PC-9 (cell line): ENCODE measurements at regions of chr6 and their contacts with region 1.

Region 1: DNA sequence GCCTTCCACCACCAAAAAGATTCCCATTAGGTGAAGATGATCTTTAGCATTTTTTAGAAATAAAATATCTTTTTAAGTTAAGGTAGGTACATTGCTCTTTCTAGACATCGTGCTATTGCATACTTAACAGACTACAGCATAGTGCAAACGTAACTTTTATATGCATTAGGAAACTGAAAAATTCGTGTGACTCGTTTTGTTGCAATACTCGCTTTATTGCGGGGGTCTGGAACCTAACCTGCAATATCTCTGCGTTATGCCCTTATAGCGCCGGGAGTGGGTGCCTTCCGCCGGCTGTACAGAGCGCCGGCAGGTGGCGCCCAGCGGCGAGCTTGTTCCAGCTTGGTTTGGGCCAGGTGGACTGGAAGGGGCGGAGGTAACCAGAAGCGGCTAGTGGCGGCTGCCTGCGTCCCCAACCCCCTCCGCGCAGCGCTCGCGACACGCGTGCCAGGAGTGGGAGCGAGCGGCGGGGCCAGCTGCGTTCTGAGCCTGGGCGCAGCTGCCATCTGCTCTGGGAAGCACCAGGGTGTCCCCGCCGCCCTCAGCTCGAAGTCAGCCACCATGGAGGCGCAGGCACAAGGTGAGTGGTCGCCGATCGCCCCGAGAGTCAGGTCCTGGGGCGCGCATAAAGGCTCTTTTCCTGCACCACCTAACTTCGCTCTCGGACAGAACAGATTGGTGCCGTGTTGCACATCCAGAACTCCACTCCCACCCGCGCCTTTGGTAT is at the start of gene TPD52L1:
- DNase-seq: peak; percentile 75 to 84
- H3K4me3 ChIP-seq: peak within 1 kb of the TSS; percentile 74
- H3K27ac ChIP-seq: peak within 1 kb of the TSS; percentile 63
- H3K4me1 ChIP-seq: peaks cover 44% of the 10 kb centered on the region
- H3K27me3 ChIP-seq: no peaks in the 10 kb centered on the region
- CTCF ChIP-seq: peak; percentile 97
- total RNA-seq, gene TPD52L1: 184 and 203 TPM in 2 replicates

Region 2: GRCh38 chr6:124870611-124871459 is 282.7 kb before region 1 on chr6:
- CTCF ChIA-PET with region 1: no interaction called
- POLR2A ChIA-PET with region 1: interaction called, 6 read pairs
- intact Hi-C with region 1: loop called (anchors 1 kb)
- DNase-seq: no peak
- H3K4me3 ChIP-seq: no peak overlapping the region
- H3K27ac ChIP-seq: no peak overlapping the region
- H3K4me1 ChIP-seq: no peaks in the 10 kb centered on the region
- H3K27me3 ChIP-seq: no peaks in the 10 kb centered on the region
- CTCF ChIP-seq: peak; percentile 92

Region 3: DNA sequence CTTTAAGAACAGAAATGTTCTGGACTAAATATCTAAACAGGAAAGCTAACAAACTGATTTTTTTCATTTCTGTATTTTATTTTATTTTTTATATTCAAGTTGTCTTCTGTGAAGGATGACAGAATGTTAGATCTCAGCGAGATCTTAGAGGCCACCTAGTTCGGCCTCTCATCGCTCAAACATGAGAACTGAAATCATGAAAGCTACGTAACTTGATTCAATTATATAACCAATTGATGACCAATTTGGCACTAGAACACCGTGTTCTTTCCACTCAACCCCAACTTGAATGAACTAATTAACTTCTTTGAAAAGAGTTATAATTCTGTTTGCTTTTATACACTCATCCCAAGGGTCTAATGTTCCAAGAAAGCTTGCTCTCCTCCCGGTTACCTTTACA is 215.9 kb before region 1 on chr6:
- CTCF ChIA-PET with region 1: no interaction called
- POLR2A ChIA-PET with region 1: no interaction called
- intact Hi-C with region 1: no loop called
- DNase-seq: no peak
- H3K4me3 ChIP-seq: no peak overlapping the region
- H3K27ac ChIP-seq: no peak overlapping the region
- H3K4me1 ChIP-seq: no peaks in the 10 kb centered on the region
- H3K27me3 ChIP-seq: no peaks in the 10 kb centered on the region
- CTCF ChIP-seq: no peak

Region 4: GRCh38 chr6:125123788-125124777 is 29.5 kb before region 1 on chr6:
- CTCF ChIA-PET with region 1: no interaction called
- POLR2A ChIA-PET with region 1: no interaction called
- intact Hi-C with region 1: loop called (anchors 1 kb)
- DNase-seq: peak; percentile 57 to 84
- H3K4me3 ChIP-seq: no peak overlapping the region
- H3K27ac ChIP-seq: peak overlapping the region; percentile 30; the same call in 1 of the 2 replicates
- H3K4me1 ChIP-seq: peaks cover 19% of the 10 kb centered on the region
- H3K27me3 ChIP-seq: no peaks in the 10 kb centered on the region
- CTCF ChIP-seq: no peak; the same call in 1 of the 2 replicates

Region 5: GRCh38 chr6:125197795-125198269 is 44.3 kb after region 1 on chr6:
- CTCF ChIA-PET with region 1: no interaction called
- POLR2A ChIA-PET with region 1: interaction called, 5 read pairs
- intact Hi-C with region 1: loop called (anchors 2 kb)
- DNase-seq: peak; percentile 63 to 68
- H3K4me3 ChIP-seq: no peak overlapping the region
- H3K27ac ChIP-seq: peak overlapping the region; percentile 55
- H3K4me1 ChIP-seq: peaks cover 87% of the 10 kb centered on the region
- H3K27me3 ChIP-seq: no peaks in the 10 kb centered on the region
- CTCF ChIP-seq: no peak

Region 6: DNA sequence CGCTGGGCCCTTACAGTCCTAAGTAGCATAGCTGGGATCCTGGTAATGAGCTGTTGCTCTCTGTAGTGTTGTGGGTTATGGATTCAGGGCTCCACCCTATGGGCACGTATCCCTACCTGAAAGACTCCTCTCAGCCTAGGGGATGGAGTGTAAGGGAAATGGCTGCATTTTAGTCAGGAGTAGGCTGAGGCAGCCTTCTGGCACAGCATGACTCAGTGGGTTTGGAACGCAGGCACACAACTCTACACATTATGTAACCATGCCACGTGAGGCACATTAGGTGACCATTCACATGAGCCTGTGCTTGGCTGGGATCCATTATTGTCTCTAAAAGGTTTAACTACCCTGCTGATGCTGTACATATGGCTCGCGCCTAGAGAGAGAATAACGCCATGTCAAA is 120.4 kb after region 1 on chr6:
- CTCF ChIA-PET with region 1: no interaction called
- POLR2A ChIA-PET with region 1: no interaction called
- intact Hi-C with region 1: loop called (anchors 1 kb)
- DNase-seq: peak; percentile 87 to 96
- H3K4me3 ChIP-seq: no peak overlapping the region
- H3K27ac ChIP-seq: peak overlapping the region; percentile 71
- H3K4me1 ChIP-seq: peaks cover 20% of the 10 kb centered on the region
- H3K27me3 ChIP-seq: no peaks in the 10 kb centered on the region
- CTCF ChIP-seq: no peak

Region 7: GRCh38 chr6:125307150-125307838 is 153.7 kb after region 1 on chr6:
- CTCF ChIA-PET with region 1: no interaction called
- POLR2A ChIA-PET with region 1: no interaction called
- intact Hi-C with region 1: loop called (anchors 1 kb)
- DNase-seq: peak in 1 of 2 experiments; percentile 64
- H3K4me3 ChIP-seq: no peak overlapping the region
- H3K27ac ChIP-seq: no peak overlapping the region
- H3K4me1 ChIP-seq: peaks cover 8% of the 10 kb centered on the region
- H3K27me3 ChIP-seq: no peaks in the 10 kb centered on the region
- CTCF ChIP-seq: no peak

Region 8: DNA sequence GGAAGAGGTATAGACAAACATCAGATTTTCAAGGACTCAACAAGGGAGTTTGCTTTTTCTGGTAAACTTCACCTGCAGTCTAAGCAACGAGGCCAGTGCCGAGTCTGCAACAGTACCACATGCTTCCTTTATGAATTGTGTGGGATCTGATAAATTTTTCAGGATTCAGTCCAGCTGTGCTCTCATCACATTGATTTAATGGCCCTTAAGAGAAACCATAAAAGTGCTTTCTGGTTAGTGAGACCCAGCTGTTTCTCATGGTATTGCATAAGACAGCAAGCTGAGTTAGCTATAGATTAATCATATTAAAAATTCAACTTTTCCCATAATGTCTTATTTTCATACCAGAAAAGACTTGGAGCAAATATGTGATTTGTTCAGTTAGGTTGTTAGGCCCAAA is 1477.8 kb after region 1 on chr6:
- CTCF ChIA-PET with region 1: no interaction called
- POLR2A ChIA-PET with region 1: no interaction called
- intact Hi-C with region 1: no loop called
- DNase-seq: no peak
- H3K4me3 ChIP-seq: no peak overlapping the region
- H3K27ac ChIP-seq: no peak overlapping the region
- H3K4me1 ChIP-seq: peaks cover 11% of the 10 kb centered on the region
- H3K27me3 ChIP-seq: no peaks in the 10 kb centered on the region
- CTCF ChIP-seq: no peak